HEK293 (cell line): ENCODE measurements at regions of chr5 and their contacts with region 1.

Region 1: DNA sequence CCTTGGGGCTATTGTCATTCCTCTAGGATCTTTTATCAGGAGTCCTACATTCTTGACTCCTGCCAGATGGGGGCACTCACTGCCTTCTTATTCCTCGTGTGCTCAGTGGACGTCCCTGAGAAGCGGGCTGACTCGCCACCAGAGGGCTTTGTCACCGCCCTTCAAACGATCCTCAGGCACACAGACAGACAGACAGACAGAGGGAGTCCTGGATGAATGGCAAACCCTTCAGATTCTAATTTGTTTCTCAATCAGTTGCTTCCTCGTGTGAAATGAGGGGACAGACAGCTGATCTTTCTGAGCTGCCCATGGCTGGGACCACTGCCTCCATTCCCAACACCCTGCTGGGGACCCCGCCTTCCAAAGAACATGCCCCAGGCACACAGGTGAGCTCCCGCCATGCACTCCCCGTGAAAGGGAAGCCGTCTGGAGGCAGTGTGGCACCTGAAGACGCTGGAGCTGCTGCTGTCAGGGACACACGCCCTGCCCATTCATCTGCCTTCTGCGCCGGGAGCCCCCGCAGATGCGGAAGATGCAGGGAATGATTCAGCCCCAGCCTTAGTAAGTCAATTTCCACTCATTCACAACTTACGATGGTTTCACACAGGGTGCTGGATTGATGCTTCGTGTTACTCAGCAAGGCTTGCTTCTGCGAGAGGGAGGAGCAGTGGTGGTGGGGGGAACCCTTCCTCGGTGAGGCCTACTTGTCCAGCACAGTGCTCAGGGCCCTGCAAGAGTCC is 24.9 kb upstream of the SH3PXD2B start:
- H3K4me3 ChIP-seq: no peak overlapping the region
- H3K27ac ChIP-seq: no peak overlapping the region
- H3K4me1 ChIP-seq: no peaks in the 10 kb centered on the region
- CTCF ChIP-seq: peak; percentile 97

Region 2: GRCh38 chr5:172683696-172684471 is 204.7 kb after region 1 on chr5:
- CTCF ChIA-PET with region 1: interaction called, 11 read pairs
- POLR2A ChIA-PET with region 1: no interaction called
- H3K4me3 ChIP-seq: no peak overlapping the region
- H3K27ac ChIP-seq: no peak overlapping the region
- H3K4me1 ChIP-seq: no peaks in the 10 kb centered on the region
- CTCF ChIP-seq: no peak